B cell (primary cell): ENCODE measurements at regions of chr11 and their contacts with region 1.

Region 1: GRCh38 chr11:128448200-128448886 is 139.0 kb downstream of the ETS1 start:
- DNase-seq: no peak
- ATAC-seq: no peak
- H3K4me3 ChIP-seq: no peak overlapping the region
- H3K4me3 Mint-ChIP-seq: no peak overlapping the region
- H3K27ac ChIP-seq: no peak overlapping the region
- H3K27ac Mint-ChIP-seq: no peak overlapping the region
- H3K4me1 ChIP-seq: peaks cover 5 to 10% of the 10 kb centered on the region in 2 donors
- H3K4me1 Mint-ChIP-seq: peaks cover 37% of the 10 kb centered on the region
- H3K27me3 ChIP-seq: no peaks in the 10 kb centered on the region
- H3K27me3 Mint-ChIP-seq: no peaks in the 10 kb centered on the region
- CTCF ChIP-seq: no peak

Region 2: GRCh38 chr11:128399251-128400121 is 48.9 kb before region 1 on chr11:
- CTCF ChIA-PET with region 1: no interaction called
- POLR2A ChIA-PET with region 1: no interaction called
- intact Hi-C with region 1: loop called (anchors 10 kb)
- DNase-seq: no peak
- ATAC-seq: peak; percentile 80
- H3K4me3 ChIP-seq: no peak overlapping the region
- H3K4me3 Mint-ChIP-seq: no peak overlapping the region
- H3K27ac ChIP-seq: peak overlapping the region; percentile 61 to 76
- H3K27ac Mint-ChIP-seq: peak overlapping the region; percentile 43
- H3K4me1 ChIP-seq: peaks cover 25% of the 10 kb centered on the region in 2 donors
- H3K4me1 Mint-ChIP-seq: peaks cover 36% of the 10 kb centered on the region
- H3K27me3 ChIP-seq: no peaks in the 10 kb centered on the region
- H3K27me3 Mint-ChIP-seq: no peaks in the 10 kb centered on the region
- CTCF ChIP-seq: no peak